Naive thymus-derived CD4-positive, alpha-beta T cell (primary cell): ENCODE measurements at regions of chr15 and their contacts with region 1.

Region 1: DNA sequence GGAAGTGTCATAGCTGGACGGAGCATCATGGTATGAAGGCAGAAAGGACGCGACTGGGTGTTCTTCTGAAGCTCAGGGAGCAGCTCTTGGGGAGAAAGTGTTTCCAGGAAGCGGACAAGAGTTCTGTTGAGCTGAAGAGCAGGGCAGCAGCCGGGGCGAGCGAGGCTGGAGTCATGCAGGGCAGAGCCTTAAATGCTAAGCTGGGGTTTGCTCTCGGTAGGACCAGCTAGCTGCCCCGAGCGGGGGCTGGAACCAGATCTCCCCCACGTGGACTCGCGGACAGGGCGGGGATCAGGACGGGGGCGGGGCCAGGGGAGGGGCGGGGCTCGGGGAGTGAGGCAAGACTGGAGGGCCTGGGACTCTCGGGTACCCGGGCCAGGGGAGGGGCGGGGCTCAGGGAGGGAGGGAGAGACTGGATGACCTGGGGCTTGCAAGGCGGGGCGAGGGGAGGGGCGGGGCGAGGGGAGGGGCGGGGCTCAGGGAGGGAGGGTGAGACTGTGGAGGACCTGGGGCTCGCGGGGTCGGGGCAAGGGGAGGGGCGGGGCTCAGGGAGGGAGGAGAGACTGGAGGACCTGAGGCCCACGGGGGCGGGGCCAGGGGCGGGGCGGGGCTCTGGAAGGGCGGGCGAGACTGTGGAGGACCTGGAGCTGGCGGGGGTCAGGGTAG is 486 bp upstream of the FAH start:
- DNase-seq: peak; percentile 46 to 86 (median 69)
- ATAC-seq: peak; percentile 84
- H3K4me3 ChIP-seq: peak overlapping the region; percentile 46
- H3K4me3 Mint-ChIP-seq: peak overlapping the region; percentile 73 to 97 (median 88)
- H3K27ac ChIP-seq: peak overlapping the region; percentile 64
- H3K27ac Mint-ChIP-seq: peak overlapping the region; percentile 70 to 90 (median 83)
- H3K4me1 ChIP-seq: peaks cover 0 to 7% of the 10 kb centered on the region in 2 donors
- H3K4me1 Mint-ChIP-seq: peaks cover 0 to 36% (median 22%) of the 10 kb centered on the region in 7 donors
- H3K27me3 ChIP-seq: no peaks in the 10 kb centered on the region
- H3K27me3 Mint-ChIP-seq: peaks cover 0 to 18% (median 0%) of the 10 kb centered on the region in 5 donors

Region 2: GRCh38 chr15:79310983-79311900 is 841.1 kb before region 1 on chr15 and contains the start of gene TMED3:
- CTCF ChIA-PET with region 1: no interaction called
- POLR2A ChIA-PET with region 1: no interaction called
- intact Hi-C with region 1: loop called in 1 of 2 experiments (anchors 1 kb)
- DNase-seq: peak; percentile 58 to 85 (median 79)
- ATAC-seq: peak; percentile 92
- H3K4me3 ChIP-seq: peak within 1 kb of the TSS; percentile 90
- H3K4me3 Mint-ChIP-seq: peak within 1 kb of the TSS; percentile 85 to 93 (median 90)
- H3K27ac ChIP-seq: peak within 1 kb of the TSS; percentile 62
- H3K27ac Mint-ChIP-seq: peak within 1 kb of the TSS; percentile 4 to 74 (median 66)
- H3K4me1 ChIP-seq: peaks cover 13 to 20% of the 10 kb centered on the region in 2 donors
- H3K4me1 Mint-ChIP-seq: peaks cover 24 to 52% (median 46%) of the 10 kb centered on the region in 7 donors
- H3K27me3 ChIP-seq: no peaks in the 10 kb centered on the region
- H3K27me3 Mint-ChIP-seq: peaks cover 0 to 29% (median 4%) of the 10 kb centered on the region in 5 donors
- total RNA-seq, gene TMED3: 18.6 to 40.5 (median 21.1) TPM

Region 3: DNA sequence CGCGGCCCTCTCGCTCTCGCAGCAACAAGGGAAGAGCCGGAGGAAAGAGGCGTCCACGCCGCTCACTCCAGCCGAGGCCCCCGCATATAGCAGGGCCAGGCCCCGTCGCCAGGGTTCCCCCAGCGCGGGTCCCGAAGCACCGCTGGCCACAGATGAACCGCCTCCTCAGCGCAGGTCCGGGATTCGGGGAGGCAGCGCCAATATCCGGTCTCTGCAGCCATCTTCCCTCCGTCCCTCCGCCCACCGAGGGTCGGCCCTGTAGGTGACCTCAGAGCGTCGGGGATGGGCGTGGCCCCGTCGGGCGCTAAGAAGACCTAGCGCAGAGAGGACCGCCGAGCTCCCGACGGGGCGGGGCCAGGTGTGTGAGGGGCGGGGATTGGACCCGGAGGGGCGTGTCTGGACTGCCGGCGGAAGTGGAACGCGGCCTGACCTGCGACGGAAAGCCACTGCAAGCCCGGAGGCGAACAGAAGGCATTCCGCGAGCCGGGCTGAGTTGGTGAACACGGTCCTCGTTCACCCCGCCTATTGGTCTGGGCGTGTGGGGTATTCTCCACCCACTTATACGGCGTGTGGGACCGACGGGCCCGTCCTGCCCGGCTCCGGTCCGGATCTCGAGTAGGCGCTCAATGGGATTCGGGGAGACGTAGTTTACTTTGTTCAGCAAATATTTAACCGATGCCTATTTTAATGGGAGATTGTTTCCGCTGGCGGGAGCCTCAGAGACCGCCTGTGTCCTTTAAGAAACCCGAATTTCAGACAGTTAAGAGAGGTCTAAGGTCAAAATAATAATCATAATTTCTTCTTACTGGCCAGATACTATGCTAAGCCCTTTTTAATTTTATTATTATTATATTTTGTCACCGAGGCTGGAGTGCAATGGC is 228.6 kb before region 1 on chr15:
- CTCF ChIA-PET with region 1: no interaction called
- POLR2A ChIA-PET with region 1: interaction called, 3 read pairs
- intact Hi-C with region 1: loop called (anchors 1 kb)
- DNase-seq: peak; percentile 95 to 100 (median 99)
- ATAC-seq: peak; percentile 98
- H3K4me3 ChIP-seq: peak overlapping the region; percentile 98
- H3K4me3 Mint-ChIP-seq: peak overlapping the region; percentile 90 to 98 (median 94)
- H3K27ac ChIP-seq: peak overlapping the region; percentile 96
- H3K27ac Mint-ChIP-seq: peak overlapping the region; percentile 95 to 98 (median 97)
- H3K4me1 ChIP-seq: peaks cover 11 to 14% of the 10 kb centered on the region in 2 donors
- H3K4me1 Mint-ChIP-seq: peaks cover 9 to 30% (median 24%) of the 10 kb centered on the region in 7 donors
- H3K27me3 ChIP-seq: no peaks in the 10 kb centered on the region
- H3K27me3 Mint-ChIP-seq: no peaks in the 10 kb centered on the region

Region 4: DNA sequence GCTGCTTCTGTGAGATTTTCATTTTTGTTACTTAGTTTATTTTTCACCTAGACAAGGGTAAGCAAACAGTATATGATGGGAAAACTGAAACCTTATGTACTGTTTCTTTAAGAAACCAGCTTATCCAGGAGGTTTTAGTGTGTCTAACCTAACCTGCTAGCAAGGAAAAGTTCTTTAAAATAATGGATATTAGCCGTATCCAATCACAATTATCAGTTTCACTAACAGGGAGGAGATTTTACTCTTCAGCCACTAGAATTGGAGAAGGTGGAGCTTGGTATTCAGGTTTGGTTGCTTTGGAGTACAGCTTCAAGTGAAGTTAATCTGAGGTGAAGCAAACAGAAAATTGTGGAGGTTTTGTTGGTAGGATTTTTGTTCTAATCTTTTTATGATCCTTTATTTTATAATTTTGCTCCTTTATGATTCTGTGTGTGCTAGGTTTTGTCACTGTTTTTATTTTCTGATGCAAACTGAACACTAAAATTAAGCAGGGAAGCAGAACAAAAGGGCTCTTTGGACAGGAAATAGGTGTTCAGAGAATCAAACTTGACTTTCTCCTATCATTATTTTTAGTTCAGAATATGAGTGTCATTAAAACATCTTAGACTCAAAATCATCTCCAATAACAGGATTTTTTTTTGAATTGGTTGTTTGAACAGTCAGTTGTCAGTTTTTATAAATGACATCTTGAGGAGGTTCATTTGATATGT is 79.9 kb before region 1 on chr15:
- CTCF ChIA-PET with region 1: no interaction called
- POLR2A ChIA-PET with region 1: no interaction called
- intact Hi-C with region 1: loop called (anchors 1 kb)
- DNase-seq: peak in 7 of 9 donors; percentile 56 to 80 (median 63)
- ATAC-seq: peak; percentile 97
- H3K4me3 ChIP-seq: peak overlapping the region; percentile 10
- H3K4me3 Mint-ChIP-seq: peak overlapping the region; percentile 58 to 94 (median 84)
- H3K27ac ChIP-seq: peak overlapping the region; percentile 61
- H3K27ac Mint-ChIP-seq: peak overlapping the region; percentile 17 to 85 (median 65)
- H3K4me1 ChIP-seq: peaks cover 8 to 14% of the 10 kb centered on the region in 2 donors
- H3K4me1 Mint-ChIP-seq: peaks cover 36 to 89% (median 78%) of the 10 kb centered on the region in 7 donors
- H3K27me3 ChIP-seq: no peaks in the 10 kb centered on the region
- H3K27me3 Mint-ChIP-seq: no peaks in the 10 kb centered on the region

Region 5: GRCh38 chr15:81274931-81275707 is 1122.8 kb after region 1 on chr15:
- CTCF ChIA-PET with region 1: no interaction called
- POLR2A ChIA-PET with region 1: no interaction called
- intact Hi-C with region 1: loop called in 1 of 2 experiments (anchors 5 kb)
- DNase-seq: peak; percentile 59 to 86 (median 78)
- ATAC-seq: peak; percentile 94
- H3K4me3 ChIP-seq: no peak overlapping the region
- H3K4me3 Mint-ChIP-seq: peak overlapping the region; percentile 13 to 75 (median 60)
- H3K27ac ChIP-seq: peak overlapping the region; percentile 52
- H3K27ac Mint-ChIP-seq: peak overlapping the region; percentile 24 to 90 (median 84)
- H3K4me1 ChIP-seq: peaks cover 0 to 27% of the 10 kb centered on the region in 2 donors
- H3K4me1 Mint-ChIP-seq: peaks cover 21 to 59% (median 54%) of the 10 kb centered on the region in 7 donors
- H3K27me3 ChIP-seq: no peaks in the 10 kb centered on the region
- H3K27me3 Mint-ChIP-seq: no peaks in the 10 kb centered on the region